ENCODE measurements at regions of chr1 and their contacts with region 1.

Region 1: GRCh38 chr1:117067533-117068370 is 7.6 kb downstream of the TTF2 start:
- DNase-seq: peak; percentile 43 to 48
- H3K4me3 ChIP-seq: no peak overlapping the region
- H3K27ac ChIP-seq: no peak overlapping the region
- H3K4me1 ChIP-seq: no peaks in the 10 kb centered on the region
- H3K27me3 ChIP-seq: no peaks in the 10 kb centered on the region
- CTCF ChIP-seq: peak; percentile 95

Region 2: DNA sequence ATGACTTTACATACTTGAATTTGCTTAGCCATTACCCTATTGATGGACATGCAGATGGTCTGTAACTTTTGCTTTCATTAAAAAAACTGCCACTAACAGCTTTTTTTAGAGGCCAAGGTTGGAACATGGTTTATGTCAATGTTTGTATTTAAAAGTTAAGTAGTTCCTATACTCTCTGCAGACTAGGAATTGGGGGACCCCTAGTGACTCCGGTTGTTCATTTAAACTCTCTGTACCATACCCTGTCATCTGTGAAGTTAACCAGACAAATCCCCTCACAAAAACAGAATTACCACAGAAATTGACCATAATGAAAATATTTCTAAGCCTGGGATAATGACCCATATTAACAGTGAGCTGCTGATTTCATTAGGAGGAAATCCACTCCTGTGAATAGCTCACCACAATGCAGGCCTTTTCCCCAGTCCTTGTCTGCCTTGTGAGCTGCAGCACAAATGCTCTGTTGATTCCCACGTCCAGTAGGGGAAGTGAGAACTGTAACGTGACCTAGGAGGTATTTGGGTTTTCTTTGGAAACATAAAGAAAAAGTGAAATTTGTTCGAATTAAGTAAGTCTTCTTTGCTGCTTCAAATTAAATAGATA is 96.4 kb before region 1 on chr1:
- CTCF ChIA-PET with region 1: no interaction called
- POLR2A ChIA-PET with region 1: no interaction called
- intact Hi-C with region 1: no loop called
- DNase-seq: no peak
- H3K4me3 ChIP-seq: no peak overlapping the region
- H3K27ac ChIP-seq: no peak overlapping the region
- H3K4me1 ChIP-seq: 0 out of 2 replicates have a peak, but pooled peaks cover 4% of the 10 kb centered on the region
- H3K27me3 ChIP-seq: no peaks in the 10 kb centered on the region
- CTCF ChIP-seq: no peak

Region 3: DNA sequence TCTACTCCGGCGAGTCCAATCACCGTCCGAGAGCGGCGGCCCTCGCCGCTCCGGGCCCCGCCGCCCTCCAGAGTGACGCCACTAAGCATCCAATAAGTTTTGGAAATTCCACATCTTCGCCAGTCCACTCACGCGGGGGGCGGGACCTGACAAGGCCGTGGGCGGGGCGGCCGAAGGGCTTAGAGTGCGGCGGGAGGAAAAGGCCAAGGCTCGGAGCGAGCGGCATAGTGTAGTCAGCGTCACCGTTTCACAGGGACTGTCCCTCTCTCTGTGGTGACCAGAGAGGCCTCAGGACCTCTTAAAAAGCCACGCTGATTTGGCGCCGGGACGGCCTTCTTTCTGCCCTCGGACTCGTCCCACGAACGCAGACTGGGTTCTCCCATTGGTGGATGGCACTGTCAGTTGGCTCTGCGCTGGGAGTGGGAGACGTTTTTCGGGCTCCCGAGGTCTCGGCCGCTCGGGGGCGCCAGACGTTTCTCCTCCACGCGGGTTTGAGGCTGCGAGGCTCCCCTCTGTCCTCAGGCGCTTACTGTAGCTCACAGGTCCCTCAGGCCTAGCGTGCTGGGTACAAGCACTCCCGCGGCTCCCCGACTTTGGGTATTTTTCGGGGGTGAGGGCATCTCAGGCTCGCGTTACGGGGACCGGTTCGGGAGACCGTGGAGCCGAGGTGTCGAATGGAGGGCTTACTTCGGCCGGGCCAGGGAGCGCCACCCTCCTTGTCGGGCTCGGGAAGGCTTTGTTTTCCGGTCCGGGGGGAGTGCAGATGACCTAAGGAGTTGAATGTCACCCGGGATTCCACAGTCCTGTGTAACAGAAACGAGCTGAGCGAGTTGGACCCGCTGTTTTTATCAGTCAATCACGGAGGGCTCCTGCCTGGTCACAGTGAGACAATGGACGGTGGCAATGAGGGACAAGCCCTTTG is 54.3 kb after region 1 on chr1:
- CTCF ChIA-PET with region 1: interaction called, 5 read pairs
- POLR2A ChIA-PET with region 1: no interaction called
- intact Hi-C with region 1: loop called (anchors 2 kb)
- DNase-seq: peak; percentile 95 to 98
- H3K4me3 ChIP-seq: peak overlapping the region; percentile 62; the same call in 1 of the 2 replicates
- H3K27ac ChIP-seq: peak overlapping the region; percentile 23; the same call in 1 of the 2 replicates
- H3K4me1 ChIP-seq: peaks cover 7% of the 10 kb centered on the region
- H3K27me3 ChIP-seq: no peaks in the 10 kb centered on the region
- CTCF ChIP-seq: peak; percentile 83

Region 4: DNA sequence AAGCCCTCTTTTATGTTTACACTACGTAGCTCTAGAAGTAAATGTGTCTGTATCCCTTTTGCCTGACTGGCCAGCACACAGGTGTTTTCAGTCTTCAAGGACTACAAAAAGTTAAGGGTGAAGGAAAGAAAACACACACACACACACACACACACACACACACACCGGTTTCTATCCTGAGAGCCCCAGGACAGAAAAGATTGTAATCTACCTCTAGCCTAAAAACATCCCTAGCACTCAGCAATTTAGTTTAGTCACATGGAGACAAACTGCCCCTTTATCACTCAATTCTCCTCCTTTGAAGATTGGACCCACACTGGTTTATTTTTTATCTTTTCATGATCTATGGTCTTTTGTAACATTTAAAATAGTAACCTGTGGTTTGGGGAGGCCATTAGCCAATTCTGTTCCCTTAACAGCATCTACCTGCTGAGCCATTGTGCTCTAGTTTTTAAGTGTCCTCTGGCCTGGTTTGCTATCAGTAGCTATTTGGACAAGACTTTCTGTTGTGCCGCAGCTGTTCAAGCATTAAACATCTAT is 69.6 kb after region 1 on chr1:
- CTCF ChIA-PET with region 1: no interaction called
- POLR2A ChIA-PET with region 1: no interaction called
- intact Hi-C with region 1: no loop called
- DNase-seq: no peak
- H3K4me3 ChIP-seq: no peak overlapping the region
- H3K27ac ChIP-seq: no peak overlapping the region
- H3K4me1 ChIP-seq: no peaks in the 10 kb centered on the region
- H3K27me3 ChIP-seq: no peaks in the 10 kb centered on the region
- CTCF ChIP-seq: no peak

Region 5: DNA sequence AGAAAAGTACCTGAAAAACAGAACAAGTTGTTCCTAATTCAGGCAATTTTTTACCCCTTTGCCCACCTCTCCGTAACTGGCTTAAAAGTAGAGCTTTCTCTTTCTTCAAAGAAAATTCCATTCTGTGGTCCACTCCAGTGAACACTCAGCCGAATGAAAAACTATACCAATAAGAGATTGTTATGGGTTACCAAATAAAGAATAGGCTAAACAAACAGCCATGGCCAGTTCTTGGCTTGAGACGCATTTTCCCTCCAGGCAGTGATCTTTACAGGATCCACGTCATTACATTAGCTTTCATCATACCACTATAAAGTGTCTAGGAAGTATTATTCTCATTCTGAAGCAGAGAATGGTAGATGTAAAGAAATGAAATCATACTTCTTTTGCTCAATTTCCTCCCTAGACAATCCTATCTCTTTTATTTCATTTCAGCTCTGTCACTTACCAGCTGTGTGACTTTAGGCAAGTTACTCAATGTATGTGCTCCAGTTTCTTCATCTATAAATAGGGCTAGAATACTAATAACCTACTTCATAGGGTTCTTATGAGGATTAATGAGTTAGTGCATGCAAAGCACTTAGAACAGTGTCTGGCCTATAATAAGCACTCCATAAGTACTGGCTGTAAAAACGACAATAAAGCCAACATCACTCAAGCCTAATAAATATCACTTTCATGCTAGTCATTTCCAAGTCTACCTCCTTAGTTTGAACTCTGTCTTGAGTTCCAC is 80.3 kb after region 1 on chr1:
- CTCF ChIA-PET with region 1: no interaction called
- POLR2A ChIA-PET with region 1: no interaction called
- intact Hi-C with region 1: no loop called
- DNase-seq: peak; percentile 41 to 96
- H3K4me3 ChIP-seq: peak overlapping the region; percentile 9; the same call in 1 of the 2 replicates
- H3K27ac ChIP-seq: peak overlapping the region; percentile 89
- H3K4me1 ChIP-seq: peaks cover 41% of the 10 kb centered on the region
- H3K27me3 ChIP-seq: no peaks in the 10 kb centered on the region
- CTCF ChIP-seq: no peak

Region 6: GRCh38 chr1:117284399-117285215 is 216.9 kb after region 1 on chr1:
- CTCF ChIA-PET with region 1: interaction called, 12 read pairs
- POLR2A ChIA-PET with region 1: no interaction called
- intact Hi-C with region 1: loop called (anchors 1 kb)
- DNase-seq: peak; percentile 39 to 81
- H3K4me3 ChIP-seq: no peak overlapping the region
- H3K27ac ChIP-seq: no peak overlapping the region
- H3K4me1 ChIP-seq: peaks cover 10% of the 10 kb centered on the region
- H3K27me3 ChIP-seq: no peaks in the 10 kb centered on the region
- CTCF ChIP-seq: peak; percentile 98

Region 7: GRCh38 chr1:117877823-117878222 is 810.1 kb after region 1 on chr1:
- CTCF ChIA-PET with region 1: no interaction called
- POLR2A ChIA-PET with region 1: interaction called, 10 read pairs
- intact Hi-C with region 1: no loop called
- DNase-seq: no peak
- H3K4me3 ChIP-seq: no peak overlapping the region
- H3K27ac ChIP-seq: no peak overlapping the region
- H3K4me1 ChIP-seq: no peaks in the 10 kb centered on the region
- H3K27me3 ChIP-seq: no peaks in the 10 kb centered on the region
- CTCF ChIP-seq: no peak